BJ (cell line): ENCODE measurements at regions of chr4 and their contacts with region 1.

Region 1: GRCh38 chr4:17324386-17324830 is 187.5 kb downstream of the QDPR start:
- DNase-seq: no peak
- H3K4me3 ChIP-seq: no peak overlapping the region
- H3K27me3 ChIP-seq: no peaks in the 10 kb centered on the region
- CTCF ChIP-seq: peak; percentile 68

Region 2: DNA sequence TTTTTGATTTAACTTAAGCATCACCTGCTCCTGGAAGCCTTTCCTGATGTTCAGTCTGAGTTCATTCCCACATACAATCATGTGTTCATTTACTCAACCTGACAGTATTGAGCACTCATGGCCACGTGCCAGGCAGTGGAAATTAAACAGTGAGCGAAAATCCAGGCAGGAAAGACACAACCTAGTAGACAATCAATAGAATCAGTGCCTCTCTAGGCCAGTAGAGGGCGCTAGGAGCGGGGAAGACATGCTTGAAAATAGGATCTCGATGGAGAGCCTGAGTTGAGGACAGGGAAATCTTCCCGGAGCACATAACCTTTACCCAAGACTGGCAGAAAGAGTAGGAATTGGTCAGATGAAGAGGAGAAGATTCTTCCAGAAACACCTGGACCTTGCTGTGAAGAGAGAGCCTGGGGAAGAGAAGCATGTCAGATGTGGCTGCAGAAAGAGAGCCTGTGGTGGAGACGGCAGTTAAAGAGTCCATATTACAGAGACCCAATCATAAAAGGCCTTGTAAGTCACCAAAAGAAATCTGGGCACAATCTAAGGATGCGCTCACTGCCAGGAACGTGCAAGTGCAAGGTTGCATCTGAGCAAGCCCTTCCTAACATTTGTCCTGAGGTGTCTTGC is 529.5 kb before region 1 on chr4:
- CTCF ChIA-PET with region 1: interaction called, 20 read pairs
- POLR2A ChIA-PET with region 1: no interaction called
- DNase-seq: no peak
- H3K4me3 ChIP-seq: no peak overlapping the region
- H3K27me3 ChIP-seq: no peaks in the 10 kb centered on the region
- CTCF ChIP-seq: peak; percentile 87

Region 3: GRCh38 chr4:16916719-16917337 is 407.6 kb before region 1 on chr4:
- CTCF ChIA-PET with region 1: interaction called, 18 read pairs
- POLR2A ChIA-PET with region 1: no interaction called
- DNase-seq: no peak
- H3K4me3 ChIP-seq: no peak overlapping the region
- H3K27me3 ChIP-seq: no peaks in the 10 kb centered on the region
- CTCF ChIP-seq: peak; percentile 66

Region 4: GRCh38 chr4:17063888-17064287 is 260.5 kb before region 1 on chr4:
- CTCF ChIA-PET with region 1: interaction called, 11 read pairs
- POLR2A ChIA-PET with region 1: no interaction called
- DNase-seq: peak; percentile 64
- H3K4me3 ChIP-seq: no peak overlapping the region
- H3K27me3 ChIP-seq: no peaks in the 10 kb centered on the region
- CTCF ChIP-seq: no peak

Region 5: GRCh38 chr4:17310269-17310652 is 14.1 kb before region 1 on chr4:
- CTCF ChIA-PET with region 1: interaction called, 13 read pairs
- POLR2A ChIA-PET with region 1: no interaction called
- DNase-seq: no peak
- H3K4me3 ChIP-seq: no peak overlapping the region
- H3K27me3 ChIP-seq: no peaks in the 10 kb centered on the region
- CTCF ChIP-seq: no peak

Region 6: DNA sequence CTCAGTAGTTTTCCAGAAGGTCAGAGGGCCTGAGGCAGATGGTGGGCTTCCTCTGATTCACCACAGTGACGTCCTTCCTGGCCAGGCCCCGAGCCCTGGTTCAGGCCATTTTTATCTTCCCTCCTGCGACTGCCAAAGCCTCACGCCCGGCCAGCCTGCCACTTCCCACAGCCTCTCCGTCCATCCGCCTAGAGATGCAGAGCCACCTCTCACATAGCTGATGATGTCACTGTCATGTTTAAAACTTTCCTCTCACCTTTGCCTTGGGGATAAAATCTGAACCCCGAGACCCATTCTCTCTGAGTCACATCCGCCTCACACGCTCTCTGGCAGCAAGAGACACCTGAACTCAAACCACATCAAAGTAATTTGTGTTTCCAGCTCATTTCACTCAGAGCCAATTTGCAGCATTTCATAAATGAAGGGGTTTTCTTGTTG is 12.1 kb after region 1 on chr4:
- CTCF ChIA-PET with region 1: interaction called, 12 read pairs
- POLR2A ChIA-PET with region 1: no interaction called
- DNase-seq: no peak
- H3K4me3 ChIP-seq: no peak overlapping the region
- H3K27me3 ChIP-seq: peaks cover 6% of the 10 kb centered on the region
- CTCF ChIP-seq: no peak

Region 7: DNA sequence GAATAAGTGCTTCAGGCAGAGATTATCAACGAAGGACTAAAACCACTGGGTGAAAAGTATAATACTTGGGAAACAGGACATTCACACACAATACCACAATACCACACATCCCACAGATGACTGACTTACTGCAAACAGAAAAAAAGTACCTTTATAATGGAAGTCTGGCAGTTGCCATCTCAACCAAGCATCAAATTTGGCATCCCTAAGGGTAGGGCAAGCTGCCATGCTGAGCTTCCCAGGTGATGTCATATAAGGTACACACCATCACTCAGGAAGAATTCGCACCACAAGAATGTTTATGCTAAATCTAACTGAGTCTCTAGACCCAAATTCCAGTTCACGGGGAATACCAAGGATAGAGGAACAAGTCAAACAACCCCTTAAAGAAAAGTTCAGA is 178.3 kb after region 1 on chr4:
- CTCF ChIA-PET with region 1: no interaction called
- POLR2A ChIA-PET with region 1: no interaction called
- DNase-seq: no peak
- H3K4me3 ChIP-seq: no peak overlapping the region
- H3K27me3 ChIP-seq: no peaks in the 10 kb centered on the region
- CTCF ChIP-seq: no peak